ENCODE measurements at regions of chr12 and their contacts with region 1.

Region 1: GRCh38 chr12:121499929-121500793 is 80.7 kb downstream of the KDM2B start:
- DNase-seq: peak; percentile 86
- CTCF ChIP-seq: peak; percentile 91

Region 2: DNA sequence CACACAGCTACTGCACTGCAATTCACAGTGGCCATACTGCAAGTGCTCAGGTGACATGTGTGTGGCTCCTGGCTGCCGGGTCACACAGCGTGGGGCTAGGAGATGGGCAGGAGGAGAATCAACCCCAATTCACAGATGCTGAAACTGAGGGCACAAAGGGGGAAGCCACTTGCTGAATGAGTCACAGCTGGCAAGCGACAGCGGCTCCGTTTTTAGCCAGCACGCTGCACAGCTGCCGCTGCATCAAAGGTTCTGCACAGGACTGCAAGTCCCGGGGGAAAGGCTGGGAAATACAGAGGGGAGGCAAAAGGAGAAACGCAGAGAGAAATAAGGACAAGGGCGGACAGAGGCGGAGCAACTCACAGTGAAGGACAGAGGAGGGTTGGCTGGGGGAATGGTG is 22.8 kb after region 1 on chr12:
- CTCF ChIA-PET with region 1: interaction called, 13 read pairs
- POLR2A ChIA-PET with region 1: no interaction called
- DNase-seq: peak; percentile 46
- CTCF ChIP-seq: no peak

Region 3: DNA sequence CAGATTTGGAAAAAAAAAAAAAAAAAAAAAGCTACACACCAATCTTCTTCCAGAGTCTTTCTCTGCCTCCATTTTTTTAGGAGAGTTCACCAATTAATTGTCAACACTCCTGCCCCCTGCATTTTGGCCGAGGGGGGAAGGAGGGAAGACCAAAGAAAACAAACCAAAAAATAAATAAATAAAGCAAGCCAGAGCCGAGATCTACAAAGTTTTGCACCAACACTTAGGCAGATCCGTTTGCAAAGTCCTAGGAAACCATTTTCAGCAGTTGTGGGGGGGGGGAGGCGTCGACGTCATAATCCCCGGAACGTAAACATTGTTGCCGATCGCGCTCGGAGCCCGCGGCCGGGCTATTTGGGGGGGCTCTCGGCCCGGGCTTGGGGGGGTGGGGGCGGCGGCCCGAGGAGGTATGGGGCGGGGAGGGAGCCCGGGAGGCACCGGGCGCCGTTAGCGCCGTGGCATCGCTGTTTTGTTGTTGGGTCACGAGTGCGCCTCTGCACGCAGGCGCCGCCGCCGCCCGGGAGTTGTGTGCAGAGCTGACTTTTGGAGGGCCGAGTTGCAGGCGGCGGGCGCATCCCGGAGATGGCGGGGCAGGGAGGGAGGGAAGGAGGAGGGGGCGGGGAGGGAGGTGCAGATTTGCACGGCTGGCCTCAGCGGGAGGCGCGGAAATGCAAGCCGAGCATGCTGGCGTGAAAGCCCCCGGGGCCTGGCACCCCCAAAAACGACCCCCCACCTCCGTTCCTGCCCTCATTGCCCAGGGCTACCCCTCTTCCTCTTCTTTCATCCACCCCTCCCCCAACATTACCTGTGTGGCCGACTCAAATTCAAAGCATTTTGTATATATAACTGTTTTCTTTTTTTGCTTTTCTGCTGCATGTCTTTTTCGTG is 80.1 kb after region 1 on chr12:
- CTCF ChIA-PET with region 1: interaction called, 16 read pairs
- POLR2A ChIA-PET with region 1: no interaction called
- DNase-seq: peak; percentile 71
- CTCF ChIP-seq: no peak

Region 4: DNA sequence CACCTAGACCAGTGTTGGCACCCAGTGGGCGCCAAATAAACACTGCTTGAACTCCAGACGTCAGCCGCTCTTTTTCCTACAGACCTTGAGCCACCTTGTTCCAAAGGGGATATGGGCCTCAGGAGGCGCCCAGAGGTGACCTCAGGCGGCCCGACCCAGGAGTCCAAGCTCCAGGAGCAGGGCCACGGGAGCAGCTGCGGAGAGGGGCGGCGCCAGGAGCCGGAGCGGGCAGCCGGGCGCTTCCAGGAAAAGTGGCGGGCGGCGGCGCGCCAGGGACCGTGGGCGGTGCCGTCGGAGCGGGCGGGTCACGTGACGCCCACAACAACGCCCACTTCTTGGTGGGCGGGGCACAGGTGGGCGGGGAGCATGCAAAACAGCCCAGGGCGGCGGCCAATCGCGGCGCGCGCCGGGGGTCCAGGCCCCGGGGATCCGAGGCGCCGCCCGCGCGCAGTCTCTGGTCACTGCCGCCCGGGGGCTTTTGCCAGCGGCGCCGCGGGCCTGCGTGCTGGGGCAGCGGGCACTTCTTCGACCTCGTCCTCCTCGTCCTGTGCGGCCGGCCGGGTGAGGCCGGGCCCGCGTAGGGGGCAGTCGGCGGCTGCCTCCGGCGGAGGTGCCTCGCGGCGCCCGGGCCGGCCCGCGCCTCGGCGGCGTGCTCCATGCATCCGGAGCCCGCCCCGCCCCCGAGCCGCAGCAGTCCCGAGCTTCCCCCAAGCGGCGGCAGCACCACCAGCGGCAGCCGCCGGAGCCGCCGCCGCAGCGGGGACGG is 126.1 kb after region 1 on chr12 and contains the start of gene ORAI1:
- CTCF ChIA-PET with region 1: interaction called, 14 read pairs
- POLR2A ChIA-PET with region 1: interaction called, 3 read pairs
- DNase-seq: peak; percentile 94
- CTCF ChIP-seq: peak; percentile 25

Region 5: GRCh38 chr12:121668750-121669520 is 168.8 kb after region 1 on chr12:
- CTCF ChIA-PET with region 1: interaction called, 12 read pairs
- POLR2A ChIA-PET with region 1: no interaction called
- DNase-seq: no peak
- CTCF ChIP-seq: peak; percentile 48

Region 6: DNA sequence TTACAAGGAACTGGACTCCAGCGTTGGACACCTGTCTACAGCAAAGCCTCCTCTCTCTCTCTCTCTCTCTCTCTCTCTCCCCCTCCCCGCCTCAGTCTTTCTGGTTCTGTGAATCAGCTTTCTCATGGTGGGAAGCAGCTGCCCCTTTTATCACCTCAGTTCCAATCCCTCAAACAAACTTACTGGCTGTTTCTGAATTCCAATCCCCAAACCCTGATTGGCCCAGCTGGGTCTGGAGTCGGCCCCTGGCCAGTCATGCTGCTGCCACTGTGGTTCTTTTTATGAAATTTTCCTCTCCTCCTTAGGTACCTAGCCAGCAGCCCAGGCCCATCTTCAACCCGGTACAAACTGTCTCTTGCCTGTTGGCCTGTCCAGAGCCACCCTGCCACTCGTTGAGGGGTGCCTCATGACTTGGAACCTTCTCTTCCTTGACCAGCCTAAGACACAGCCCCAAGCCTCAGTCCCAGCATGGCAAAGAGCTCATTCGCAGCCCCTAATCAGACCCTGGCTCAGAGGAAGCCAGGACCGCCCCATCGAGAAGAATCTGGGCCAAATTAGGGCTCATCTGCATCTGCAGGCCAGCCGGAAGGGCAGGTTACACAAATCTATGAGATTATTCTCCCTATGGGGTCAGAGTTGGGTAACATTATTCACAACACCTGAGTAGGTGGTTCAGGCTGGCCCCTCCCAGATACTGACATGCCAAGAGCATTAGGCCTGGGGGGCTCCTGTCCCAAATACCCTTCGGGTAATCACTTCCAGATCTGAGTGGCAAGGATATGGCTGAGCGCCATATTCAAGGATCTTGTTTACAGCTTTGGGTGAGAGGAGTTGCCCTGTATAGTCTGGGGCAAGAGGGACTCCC is 178.8 kb after region 1 on chr12:
- CTCF ChIA-PET with region 1: interaction called, 23 read pairs
- POLR2A ChIA-PET with region 1: no interaction called
- DNase-seq: no peak
- CTCF ChIP-seq: no peak

Region 7: GRCh38 chr12:122031342-122032216 is 531.4 kb after region 1 on chr12:
- CTCF ChIA-PET with region 1: no interaction called
- POLR2A ChIA-PET with region 1: no interaction called
- DNase-seq: peak; percentile 70
- CTCF ChIP-seq: peak; percentile 54